ENCODE measurements at regions of chr17 and their contacts with region 1.

Region 1: GRCh38 chr17:6651357-6651918 is at the starts of genes C17orf100 and MED31:
- DNase-seq: peak; percentile 97
- CTCF ChIP-seq: no peak

Region 2: DNA sequence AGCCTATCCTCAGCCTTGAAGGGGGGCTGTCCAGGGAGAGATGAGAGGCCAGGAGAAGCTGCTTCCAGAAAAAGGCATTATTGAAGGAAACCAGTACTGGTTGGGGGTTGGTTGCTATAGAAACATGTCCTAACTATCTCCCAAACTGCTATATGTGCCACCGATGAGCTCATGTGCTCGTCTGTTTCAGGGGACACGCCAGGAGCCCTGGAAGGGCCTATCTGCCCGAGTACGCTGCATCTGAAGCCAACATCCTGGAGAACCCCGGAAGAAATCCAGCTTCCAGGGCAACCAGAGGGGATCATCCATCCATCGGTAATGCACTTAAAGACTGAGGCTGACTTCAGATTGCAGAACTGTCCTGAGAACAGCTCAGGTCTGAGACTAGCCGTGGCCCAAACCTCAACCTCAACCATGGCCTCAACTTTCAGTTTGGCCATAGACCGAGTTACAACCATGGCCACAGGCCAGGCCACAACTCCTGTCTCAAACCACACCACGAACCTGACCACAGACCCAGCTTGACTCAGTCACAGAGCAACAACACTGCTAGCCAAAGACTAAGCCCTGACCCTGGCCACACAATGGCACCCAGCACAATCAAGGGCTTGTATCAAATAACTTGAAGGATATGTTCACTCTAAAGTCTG is 105.2 kb before region 1 on chr17:
- in situ Hi-C with region 1: no loop called
- DNase-seq: peak; percentile 48
- CTCF ChIP-seq: no peak

Region 3: GRCh38 chr17:7014261-7014994 is 363.0 kb after region 1 on chr17:
- in situ Hi-C with region 1: loop called (anchors 25 kb)
- DNase-seq: peak; percentile 93
- CTCF ChIP-seq: peak; percentile 93